ENCODE measurements at regions of chr15 and their contacts with region 1.

Region 1: DNA sequence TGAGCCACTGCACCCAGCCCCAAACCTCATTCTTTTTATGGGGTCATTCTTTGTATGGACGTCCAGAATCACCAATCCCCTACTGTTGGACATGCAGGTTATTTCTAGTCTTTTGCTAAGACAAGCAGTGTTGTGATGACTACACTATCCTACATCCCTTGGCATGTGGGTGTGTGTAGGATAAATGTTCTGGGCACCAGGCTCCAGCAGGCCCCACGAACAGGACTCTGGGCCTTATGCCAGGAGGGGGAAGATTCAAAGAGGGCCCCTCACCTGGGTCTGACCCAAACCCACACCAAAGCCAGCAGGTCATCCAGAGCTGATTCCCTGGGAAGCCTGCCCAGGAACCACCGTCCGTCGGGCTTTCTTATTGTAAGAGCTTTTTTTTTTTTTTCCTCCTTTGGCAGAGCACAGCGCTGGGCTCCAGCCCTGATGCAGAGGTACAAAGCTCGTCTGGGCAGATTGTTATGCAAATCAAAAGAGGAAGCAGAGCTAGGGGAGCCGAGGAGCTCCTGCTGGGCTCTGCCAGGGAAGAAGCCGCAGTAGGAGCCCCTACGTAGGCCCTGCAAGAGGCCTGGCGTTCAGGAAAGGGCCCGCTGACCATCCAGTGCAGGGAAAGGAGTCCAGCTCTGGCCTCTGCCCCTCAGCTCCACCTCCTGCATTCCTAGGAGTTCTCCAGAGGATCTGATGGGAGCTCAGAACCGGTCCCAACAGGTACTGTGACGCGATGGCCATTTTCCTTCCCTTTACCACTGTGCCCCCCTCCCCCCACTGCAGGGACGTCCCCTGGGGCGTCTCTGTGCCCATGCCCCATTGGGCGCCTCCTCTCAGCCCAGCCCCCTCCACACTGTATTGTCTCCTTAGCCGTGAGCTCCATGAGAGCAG is 29.0 kb upstream of the FURIN start:
- DNase-seq: no peak
- H3K4me3 ChIP-seq: no peak overlapping the region
- H3K27me3 ChIP-seq: no peaks in the 10 kb centered on the region
- CTCF ChIP-seq: no peak

Region 2: DNA sequence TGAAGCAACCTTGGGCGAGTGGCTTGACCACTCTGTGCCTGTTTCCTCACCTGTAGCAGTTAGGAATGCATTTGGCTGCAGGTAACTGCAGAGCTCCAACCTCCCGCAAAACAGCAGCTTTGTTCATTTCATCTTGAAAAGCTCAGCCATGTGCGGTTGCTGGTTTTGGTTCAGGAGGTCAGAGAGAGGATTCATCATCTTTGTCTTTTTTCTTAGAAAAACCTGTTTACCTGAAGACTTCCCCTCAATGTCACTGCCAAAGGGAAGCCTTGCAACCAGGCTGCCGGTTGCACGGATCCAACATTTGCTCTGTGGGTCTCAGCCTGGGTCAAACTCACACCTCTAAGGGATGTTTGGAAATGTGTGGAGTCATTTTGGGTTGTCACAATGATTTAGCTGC is 12.5 kb after region 1 on chr15:
- CTCF ChIA-PET with region 1: no interaction called
- POLR2A ChIA-PET with region 1: interaction called, 19 read pairs
- DNase-seq: no peak
- H3K4me3 ChIP-seq: no peak overlapping the region
- H3K27me3 ChIP-seq: no peaks in the 10 kb centered on the region
- CTCF ChIP-seq: no peak

Region 3: GRCh38 chr15:90862487-90862886 is 23.1 kb after region 1 on chr15:
- CTCF ChIA-PET with region 1: no interaction called
- POLR2A ChIA-PET with region 1: no interaction called
- DNase-seq: no peak
- H3K4me3 ChIP-seq: no peak overlapping the region
- H3K27me3 ChIP-seq: no peaks in the 10 kb centered on the region
- CTCF ChIP-seq: no peak

Region 4: GRCh38 chr15:90872486-90873379 is 33.3 kb after region 1 on chr15:
- CTCF ChIA-PET with region 1: no interaction called
- POLR2A ChIA-PET with region 1: no interaction called
- DNase-seq: no peak
- H3K4me3 ChIP-seq: peak overlapping the region; percentile 71
- H3K27me3 ChIP-seq: no peaks in the 10 kb centered on the region
- CTCF ChIP-seq: no peak

Region 5: GRCh38 chr15:90994417-90995311 is 155.2 kb after region 1 on chr15 and contains the start of gene PRC1:
- CTCF ChIA-PET with region 1: no interaction called
- POLR2A ChIA-PET with region 1: no interaction called
- DNase-seq: peak; percentile 85
- H3K4me3 ChIP-seq: peak within 1 kb of the TSS; percentile 75
- H3K27me3 ChIP-seq: no peaks in the 10 kb centered on the region
- CTCF ChIP-seq: no peak
- polyA plus RNA-seq, gene PRC1: 173 and 199 TPM in 2 replicates

Region 6: GRCh38 chr15:91407237-91407889 is 567.9 kb after region 1 on chr15:
- CTCF ChIA-PET with region 1: no interaction called
- POLR2A ChIA-PET with region 1: no interaction called
- DNase-seq: no peak
- H3K4me3 ChIP-seq: no peak overlapping the region
- H3K27me3 ChIP-seq: no peaks in the 10 kb centered on the region
- CTCF ChIP-seq: no peak